Gastrocnemius medialis (tissue), 4 donors: ENCODE measurements at regions of chr6 and their contacts with region 1.

Region 1: DNA sequence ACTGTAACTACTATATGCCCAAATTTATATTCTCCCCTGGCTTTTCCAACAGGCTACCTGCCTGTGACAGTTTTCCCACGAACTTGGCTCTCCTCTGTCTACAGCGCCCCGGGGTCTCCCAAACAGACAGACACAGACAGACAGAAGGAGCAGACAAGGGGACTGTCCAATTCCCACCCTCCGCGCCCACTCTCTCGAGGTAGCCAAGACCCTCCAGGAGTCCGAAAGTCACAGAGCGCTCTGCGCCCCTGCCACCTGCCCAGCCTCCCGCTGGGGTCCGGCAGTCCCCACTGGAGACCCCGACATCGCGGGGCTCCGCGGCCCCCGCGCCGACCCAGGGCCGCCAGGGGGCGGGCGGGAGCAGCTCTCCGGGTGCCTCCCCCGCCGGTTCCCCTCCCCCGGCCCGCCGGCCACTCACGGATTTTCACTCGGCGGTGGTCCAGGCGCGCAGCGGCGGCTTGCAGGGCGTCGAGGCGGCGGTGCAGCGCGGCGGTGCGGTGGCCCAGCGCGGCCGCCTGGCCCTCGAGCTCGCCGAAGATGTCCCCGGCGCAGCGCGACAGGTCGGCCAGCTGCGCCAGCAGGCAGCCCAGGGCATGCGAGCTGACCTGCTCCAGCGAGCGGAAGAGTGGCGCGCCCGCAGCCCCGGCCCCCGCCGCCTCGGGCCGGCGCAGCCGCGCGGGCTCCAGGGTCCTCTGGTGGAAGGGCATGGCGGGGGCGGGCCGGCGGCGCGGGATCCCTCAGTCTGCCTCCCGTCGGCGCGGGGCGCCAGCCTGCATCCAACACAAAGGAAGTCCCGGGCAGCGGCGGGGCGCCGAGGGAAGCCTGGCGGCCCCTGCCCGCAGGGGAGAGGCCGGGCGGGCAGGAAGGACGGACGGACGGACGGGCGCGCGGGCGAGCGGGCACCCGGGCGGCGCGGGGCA is 81.3 kb upstream of the CCDC28A start:
- DNase-seq: peak; percentile 16 to 41
- ATAC-seq: peak; percentile 84 to 86
- H3K4me3 ChIP-seq: peak overlapping the region; percentile 60 to 67 (median 64)
- H3K27ac ChIP-seq: peak overlapping the region in 3 of 4 donors; percentile 16 to 35 (median 30)
- H3K4me1 ChIP-seq: peaks cover 0 to 3% of the 10 kb centered on the region in 2 donors
- H3K27me3 ChIP-seq: no peaks in the 10 kb centered on the region
- CTCF ChIP-seq: peak; percentile 46 to 88 (median 70)
- POLR2A ChIP-seq: no peak

Region 2: GRCh38 chr6:138588805-138589434 is 103.4 kb before region 1 on chr6:
- in situ Hi-C with region 1: no loop called
- intact Hi-C with region 1: loop called (anchors 10 kb)
- DNase-seq: peak in 1 of 2 donors; percentile 12
- ATAC-seq: peak; percentile 43 to 63
- H3K4me3 ChIP-seq: no peak overlapping the region
- H3K27ac ChIP-seq: no peak overlapping the region
- H3K4me1 ChIP-seq: peaks cover 0 to 12% of the 10 kb centered on the region in 2 donors
- H3K27me3 ChIP-seq: no peaks in the 10 kb centered on the region
- CTCF ChIP-seq: peak; percentile 82 to 88 (median 83)
- POLR2A ChIP-seq: no peak

Region 3: GRCh38 chr6:138719011-138719635 is 26.8 kb after region 1 on chr6:
- in situ Hi-C with region 1: no loop called
- intact Hi-C with region 1: no loop called
- DNase-seq: no peak
- ATAC-seq: peak; percentile 58 to 83
- H3K4me3 ChIP-seq: no peak overlapping the region
- H3K27ac ChIP-seq: peak overlapping the region; percentile 34 to 69 (median 49)
- H3K4me1 ChIP-seq: peaks cover 0 to 4% of the 10 kb centered on the region in 2 donors
- H3K27me3 ChIP-seq: no peaks in the 10 kb centered on the region
- CTCF ChIP-seq: no peak
- POLR2A ChIP-seq: no peak

Region 4: DNA sequence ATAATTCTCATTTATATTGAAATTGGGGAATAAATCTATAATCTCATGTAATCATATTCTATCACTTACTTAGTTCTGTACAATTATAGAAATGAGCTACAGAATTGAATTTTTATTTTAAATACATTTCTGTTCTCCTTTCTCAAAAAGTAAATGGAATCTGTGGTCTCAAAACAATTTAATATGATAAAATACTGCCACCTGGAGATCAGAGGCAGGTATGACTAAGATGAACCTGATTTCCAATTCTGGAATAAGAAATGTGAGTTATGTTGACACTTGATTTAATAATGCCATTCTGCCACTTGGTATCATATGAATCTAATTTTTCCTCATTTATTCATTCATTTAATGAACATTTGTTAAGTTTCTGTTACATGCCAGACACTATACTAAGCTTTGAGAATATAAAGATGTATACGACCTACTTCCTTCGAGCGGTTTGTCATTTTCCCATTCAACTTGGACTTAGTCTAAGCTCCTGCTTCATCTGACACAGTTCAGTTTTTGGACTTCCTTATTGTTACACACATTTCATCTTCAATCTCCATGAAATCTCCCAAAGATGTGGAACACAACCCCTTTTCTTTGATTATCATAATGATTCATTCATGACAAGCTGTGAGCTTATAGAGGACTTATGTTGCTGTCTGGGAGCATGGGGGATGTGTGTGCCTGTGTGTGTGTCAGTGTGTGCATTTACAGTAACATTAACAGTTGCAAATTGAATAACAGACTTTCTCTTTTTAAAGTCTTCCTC is 73.8 kb after region 1 on chr6:
- in situ Hi-C with region 1: loop called in 2 of 4 experiments (anchors 5 to 10 kb)
- intact Hi-C with region 1: no loop called
- DNase-seq: no peak
- ATAC-seq: no peak
- H3K4me3 ChIP-seq: no peak overlapping the region
- H3K27ac ChIP-seq: no peak overlapping the region
- H3K4me1 ChIP-seq: no peaks in the 10 kb centered on the region
- H3K27me3 ChIP-seq: no peaks in the 10 kb centered on the region
- CTCF ChIP-seq: peak; percentile 34 to 74 (median 62)
- POLR2A ChIP-seq: no peak